HepG2 (cell line): ENCODE measurements at regions of chr2 and their contacts with region 1.

Region 1: GRCh38 chr2:9555297-9556141 is at the start of gene ADAM17:
- DNase-seq: peak; percentile 95
- ATAC-seq: peak; percentile 96
- H3K4me3 ChIP-seq: peak within 1 kb of the TSS; percentile 79 to 96 (median 88)
- H3K27ac ChIP-seq: peak within 1 kb of the TSS; percentile 98
- H3K4me1 ChIP-seq: peaks cover 36% of the 10 kb centered on the region
- H3K27me3 ChIP-seq: no peaks in the 10 kb centered on the region; a peak in 1 of 5 replicates
- CTCF ChIP-seq: peak; percentile 89
- EP300 ChIP-seq: peak in 1 of 2 experiments; percentile 44; a peak in 2 of 4 replicates
- POLR2A ChIP-seq: peak; percentile 71 to 92
- RAD21 ChIP-seq: peak; percentile 70
- total RNA-seq, gene ADAM17: 18.5 and 33.4 TPM in 2 replicates

Region 2: DNA sequence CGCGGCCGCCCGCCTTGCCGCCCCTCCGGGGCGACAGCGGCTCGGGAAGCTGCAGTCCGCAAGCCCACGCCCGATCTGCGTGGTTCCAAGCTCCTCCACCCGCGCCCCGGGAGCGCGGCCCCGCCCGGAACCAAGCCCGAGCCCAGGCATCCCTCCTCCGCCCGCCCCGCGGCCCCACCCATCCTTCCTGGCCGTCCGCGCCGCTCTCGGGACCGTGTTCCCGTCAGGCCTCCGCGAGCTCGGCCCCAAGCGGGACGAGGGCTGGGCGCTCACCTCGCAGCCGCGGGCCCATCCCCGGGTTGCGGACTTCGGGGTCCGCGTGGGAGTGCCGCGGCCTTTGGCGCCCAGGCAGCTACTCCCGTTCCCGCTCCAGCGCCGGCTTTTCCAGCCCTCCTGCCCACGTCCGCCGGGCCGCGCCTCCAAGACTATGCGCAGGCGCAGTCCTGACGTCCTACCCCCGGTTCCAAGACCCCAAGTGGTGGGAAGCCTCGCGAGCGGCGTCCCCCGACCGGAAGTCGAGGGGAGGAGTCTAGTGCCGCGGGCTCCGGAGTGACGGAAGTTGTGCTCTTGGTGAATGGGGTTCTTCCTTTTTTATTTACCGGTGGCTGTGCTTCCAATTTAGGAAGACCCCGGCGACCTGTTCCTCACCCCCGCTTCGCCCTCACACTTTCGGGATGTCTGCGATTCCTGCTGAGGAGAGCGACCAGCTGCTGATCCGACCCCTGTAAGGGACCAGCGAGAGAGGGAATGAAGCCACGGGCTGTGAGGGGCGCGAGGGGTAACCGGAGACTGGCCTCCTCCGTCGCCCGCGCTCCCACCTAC is 132.2 kb before region 1 on chr2 and contains the starts of genes CPSF3 and ITGB1BP1:
- CTCF ChIA-PET with region 1: no interaction called
- POLR2A ChIA-PET with region 1: interaction called, 3 read pairs
- in situ Hi-C with region 1: no loop called
- intact Hi-C with region 1: loop called (anchors 5 kb)
- DNase-seq: peak; percentile 98
- ATAC-seq: peak; percentile 87
- H3K4me3 ChIP-seq: peak within 1 kb of the TSS; percentile 80 to 97 (median 86)
- H3K27ac ChIP-seq: peak within 1 kb of the TSS; percentile 75
- H3K4me1 ChIP-seq: peaks cover 57% of the 10 kb centered on the region
- H3K27me3 ChIP-seq: no peaks in the 10 kb centered on the region; a peak in 1 of 5 replicates
- CTCF ChIP-seq: peak; percentile 45; the same call in 1 of the 2 replicates
- EP300 ChIP-seq: 0 out of 4 replicates have a peak, but pooled peaks of 1 of the 2 experiments have one; percentile 5
- POLR2A ChIP-seq: peak; percentile 54 to 75; a peak in 3 of 4 replicates
- RAD21 ChIP-seq: peak; percentile 73
- total RNA-seq, gene CPSF3: 93.0 and 128 TPM in 2 replicates
- total RNA-seq, gene ITGB1BP1: 108 and 125 TPM in 2 replicates

Region 3: DNA sequence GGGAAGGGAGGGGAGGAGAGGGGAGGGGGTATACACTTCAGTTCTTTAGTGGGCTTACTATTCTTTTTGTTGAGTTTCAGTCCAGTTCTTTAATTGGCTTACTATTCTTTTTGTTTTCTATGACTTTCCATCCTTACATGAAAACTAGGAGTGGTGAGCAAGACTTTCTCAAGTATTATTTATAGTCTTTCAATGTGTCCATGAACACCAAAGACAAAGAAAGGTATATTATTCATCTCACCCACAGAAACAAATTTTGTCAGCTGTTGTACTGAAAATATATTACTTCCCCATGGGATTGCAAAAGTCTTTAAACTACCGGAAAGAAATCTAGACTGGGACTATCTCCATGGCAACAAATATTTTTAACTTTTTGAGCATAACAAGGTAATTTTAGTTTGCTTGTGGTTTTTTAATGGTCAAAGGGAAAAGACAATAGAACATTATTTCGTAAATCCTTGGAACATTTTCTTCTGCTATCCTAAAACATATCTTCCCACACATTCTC is 17.5 kb before region 1 on chr2:
- CTCF ChIA-PET with region 1: no interaction called
- POLR2A ChIA-PET with region 1: interaction called, 16 read pairs
- in situ Hi-C with region 1: no loop called
- intact Hi-C with region 1: no loop called
- DNase-seq: no peak
- ATAC-seq: no peak
- H3K4me3 ChIP-seq: no peak overlapping the region
- H3K27ac ChIP-seq: no peak overlapping the region
- H3K4me1 ChIP-seq: peaks cover 17% of the 10 kb centered on the region
- H3K27me3 ChIP-seq: no peaks in the 10 kb centered on the region
- CTCF ChIP-seq: no peak
- EP300 ChIP-seq: no peak
- POLR2A ChIP-seq: no peak
- RAD21 ChIP-seq: no peak

Region 4: GRCh38 chr2:9578467-9579235 is 23.1 kb after region 1 on chr2:
- CTCF ChIA-PET with region 1: no interaction called
- POLR2A ChIA-PET with region 1: interaction called, 10 read pairs
- in situ Hi-C with region 1: no loop called
- intact Hi-C with region 1: no loop called
- DNase-seq: peak; percentile 64
- ATAC-seq: peak; percentile 84
- H3K4me3 ChIP-seq: no peak overlapping the region
- H3K27ac ChIP-seq: no peak overlapping the region
- H3K4me1 ChIP-seq: peaks cover 20% of the 10 kb centered on the region
- H3K27me3 ChIP-seq: no peaks in the 10 kb centered on the region
- CTCF ChIP-seq: no peak
- EP300 ChIP-seq: no peak
- POLR2A ChIP-seq: no peak
- RAD21 ChIP-seq: no peak

Region 5: GRCh38 chr2:9770308-9771100 is 215.0 kb after region 1 on chr2:
- CTCF ChIA-PET with region 1: no interaction called
- POLR2A ChIA-PET with region 1: no interaction called
- in situ Hi-C with region 1: no loop called
- intact Hi-C with region 1: loop called (anchors 5 kb)
- DNase-seq: peak; percentile 76
- ATAC-seq: peak; percentile 63
- H3K4me3 ChIP-seq: peak overlapping the region in 1 of 3 experiments; percentile 20; a peak in 1 of 6 replicates
- H3K27ac ChIP-seq: no peak overlapping the region
- H3K4me1 ChIP-seq: peaks cover 70% of the 10 kb centered on the region
- H3K27me3 ChIP-seq: peaks cover 9 to 71% of the 10 kb centered on the region in 2 experiments
- CTCF ChIP-seq: peak; percentile 82
- EP300 ChIP-seq: no peak
- POLR2A ChIP-seq: no peak
- RAD21 ChIP-seq: no peak; the same call in 1 of the 2 replicates